ENCODE measurements at regions of chr17 and their contacts with region 1.

Region 1: DNA sequence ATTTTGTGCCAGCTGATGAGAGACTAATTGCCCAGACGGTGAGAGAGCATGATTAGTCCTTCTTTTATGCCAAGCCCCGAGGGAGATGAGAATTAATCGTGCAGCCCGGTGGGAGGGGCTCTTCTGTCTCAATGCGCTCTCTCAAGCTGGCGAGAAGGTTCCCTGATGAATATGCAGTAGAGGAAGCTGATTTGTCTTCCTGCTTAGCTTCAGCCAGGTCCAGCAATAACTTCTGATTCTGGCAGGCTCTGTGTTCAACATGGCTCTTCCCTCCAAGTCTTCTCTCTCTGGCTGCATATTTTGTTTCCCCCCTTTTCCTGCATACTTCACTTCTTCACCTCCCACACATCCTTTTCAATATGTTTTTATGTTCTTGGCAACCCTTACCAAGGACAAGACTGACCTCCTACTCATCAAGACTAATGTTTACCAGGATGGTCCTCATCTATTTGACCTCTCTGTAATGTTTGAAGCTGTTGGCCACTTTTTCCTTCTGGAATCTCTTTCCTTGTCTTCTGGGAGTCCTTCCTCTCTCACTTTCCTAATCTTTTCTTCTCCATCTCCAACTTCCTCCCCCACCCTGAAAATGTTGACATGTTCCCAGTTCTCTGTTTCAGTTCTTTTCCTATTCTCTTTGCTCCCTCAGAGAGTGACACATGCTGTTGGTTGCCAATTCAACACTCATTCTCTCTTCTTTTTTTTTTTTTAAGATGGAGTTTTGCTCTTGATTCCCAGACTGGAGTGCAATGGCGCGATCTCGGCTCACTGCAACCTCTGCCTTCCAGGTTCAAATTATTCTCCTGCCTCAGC is 33.1 kb downstream of the ARL4D start:
- DNase-seq: no peak
- ATAC-seq: peak; percentile 71
- H3K4me3 ChIP-seq: no peak overlapping the region
- H3K27ac ChIP-seq: no peak overlapping the region
- H3K4me1 ChIP-seq: peaks cover 0 to 5% of the 10 kb centered on the region in 2 donors
- H3K27me3 ChIP-seq: no peaks in the 10 kb centered on the region

Region 2: GRCh38 chr17:43477832-43478634 is 46.1 kb after region 1 on chr17:
- intact Hi-C with region 1: loop called in 1 of 2 experiments (anchors 5 kb)
- DNase-seq: no peak
- ATAC-seq: no peak
- H3K4me3 ChIP-seq: no peak overlapping the region
- H3K27ac ChIP-seq: no peak overlapping the region
- H3K4me1 ChIP-seq: no peaks in the 10 kb centered on the region
- H3K27me3 ChIP-seq: no peaks in the 10 kb centered on the region